Heart left ventricle (tissue), 16 donors: ENCODE measurements at regions of chr4 and their contacts with region 1.

Region 1: GRCh38 chr4:137124278-137124932 is 407.9 kb downstream of the PCDH18 start:
- DNase-seq: no peak
- ATAC-seq: peak; percentile 80 to 99 (median 89)
- H3K4me3 ChIP-seq: peak overlapping the region in 10 of 12 donors; percentile 5 to 59 (median 40)
- H3K27ac ChIP-seq: no peak overlapping the region
- H3K4me1 ChIP-seq: no peaks in the 10 kb centered on the region
- H3K27me3 ChIP-seq: no peaks in the 10 kb centered on the region
- CTCF ChIP-seq: peak; percentile 33 to 75 (median 63)
- POLR2A ChIP-seq: no peak

Region 2: DNA sequence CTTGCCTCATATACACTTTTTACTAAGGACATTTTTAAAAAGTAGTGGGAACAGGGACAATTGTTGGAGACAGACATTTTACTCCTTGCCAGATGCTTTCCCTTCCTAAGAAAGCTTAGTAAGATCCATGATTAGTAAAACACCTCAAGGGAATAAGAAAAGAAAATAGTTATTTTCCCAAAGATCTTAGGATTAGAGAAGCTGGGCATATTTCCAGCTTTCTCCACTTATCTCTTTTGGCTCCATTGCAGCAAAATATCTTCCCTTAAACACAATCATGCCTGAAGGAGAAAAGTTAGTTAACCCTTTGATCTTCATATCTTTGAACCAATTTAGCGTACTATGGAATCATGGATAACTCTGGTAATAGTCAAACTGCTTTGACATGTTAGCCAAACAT is 150.0 kb after region 1 on chr4:
- intact Hi-C with region 1: loop called in 1 of 10 experiments (anchors 10 kb)
- DNase-seq: no peak
- ATAC-seq: peak in 1 of 4 donors; percentile 31
- H3K4me3 ChIP-seq: no peak overlapping the region
- H3K27ac ChIP-seq: no peak overlapping the region
- H3K4me1 ChIP-seq: peaks cover 0 to 10% (median 0%) of the 10 kb centered on the region in 12 donors
- H3K27me3 ChIP-seq: no peaks in the 10 kb centered on the region
- CTCF ChIP-seq: no peak
- POLR2A ChIP-seq: no peak

Region 3: GRCh38 chr4:137531986-137532868 is 407.8 kb after region 1 on chr4 and contains the start of gene PCDH18:
- intact Hi-C with region 1: loop called in 3 of 10 experiments (anchors 10 kb)
- DNase-seq: peak; percentile 83 to 92 (median 89)
- ATAC-seq: peak; percentile 74 to 93 (median 92)
- H3K4me3 ChIP-seq: peak within 1 kb of the TSS; percentile 33 to 75 (median 60)
- H3K27ac ChIP-seq: peak within 1 kb of the TSS; percentile 64 to 87 (median 78)
- H3K4me1 ChIP-seq: peaks cover 0 to 16% (median 0%) of the 10 kb centered on the region in 12 donors
- H3K27me3 ChIP-seq: no peaks in the 10 kb centered on the region
- CTCF ChIP-seq: no peak
- POLR2A ChIP-seq: peak in 1 of 2 donors; percentile 63
- total RNA-seq, gene PCDH18: 2.2 to 14.5 (median 5.9) TPM

Region 4: DNA sequence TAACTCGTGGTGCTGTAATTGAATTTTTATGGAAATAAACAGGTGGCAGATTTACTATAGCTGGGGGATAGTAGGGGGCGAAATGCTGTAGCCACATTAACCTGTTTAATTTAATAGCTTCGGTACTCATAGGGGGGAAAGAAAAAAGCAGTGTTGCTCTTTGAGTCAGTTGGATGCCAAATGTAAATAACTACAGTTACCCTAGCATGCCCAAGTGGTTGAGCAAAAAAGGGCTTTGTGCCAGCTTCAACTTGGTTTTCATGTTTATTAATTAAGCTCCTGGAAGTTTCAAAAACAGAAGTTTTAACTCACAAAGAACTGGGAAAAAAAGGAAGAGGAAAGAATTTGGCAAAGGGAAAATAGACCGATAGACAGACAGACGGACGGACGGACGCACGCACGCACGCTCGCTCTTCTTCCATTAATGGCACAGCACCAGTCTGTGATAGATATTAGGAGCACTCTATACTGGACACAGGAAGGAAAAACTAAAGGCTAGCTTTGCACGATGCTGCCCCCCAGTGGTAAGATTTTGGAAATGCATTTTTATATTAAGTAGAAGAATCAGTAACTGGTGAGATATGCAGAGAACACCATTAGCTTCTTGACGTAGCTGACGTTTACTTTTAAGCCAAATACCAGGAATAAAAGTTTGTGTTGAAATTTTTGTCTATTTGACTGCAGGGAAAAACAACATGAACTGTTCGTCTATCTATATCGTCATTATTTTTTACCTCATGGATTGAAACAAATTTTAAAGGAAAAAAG is 965.9 kb after region 1 on chr4:
- intact Hi-C with region 1: loop called in 7 of 10 experiments (anchors 5 to 10 kb)
- DNase-seq: peak in 2 of 5 donors; percentile 42 to 43
- ATAC-seq: peak in 3 of 4 donors; percentile 74 to 86 (median 74)
- H3K4me3 ChIP-seq: peak overlapping the region in 3 of 12 donors; percentile 18 to 32 (median 28)
- H3K27ac ChIP-seq: no peak overlapping the region
- H3K4me1 ChIP-seq: peaks cover 0 to 14% (median 2%) of the 10 kb centered on the region in 12 donors
- H3K27me3 ChIP-seq: no peaks in the 10 kb centered on the region
- CTCF ChIP-seq: peak; percentile 69 to 89 (median 80)
- POLR2A ChIP-seq: no peak

Region 5: DNA sequence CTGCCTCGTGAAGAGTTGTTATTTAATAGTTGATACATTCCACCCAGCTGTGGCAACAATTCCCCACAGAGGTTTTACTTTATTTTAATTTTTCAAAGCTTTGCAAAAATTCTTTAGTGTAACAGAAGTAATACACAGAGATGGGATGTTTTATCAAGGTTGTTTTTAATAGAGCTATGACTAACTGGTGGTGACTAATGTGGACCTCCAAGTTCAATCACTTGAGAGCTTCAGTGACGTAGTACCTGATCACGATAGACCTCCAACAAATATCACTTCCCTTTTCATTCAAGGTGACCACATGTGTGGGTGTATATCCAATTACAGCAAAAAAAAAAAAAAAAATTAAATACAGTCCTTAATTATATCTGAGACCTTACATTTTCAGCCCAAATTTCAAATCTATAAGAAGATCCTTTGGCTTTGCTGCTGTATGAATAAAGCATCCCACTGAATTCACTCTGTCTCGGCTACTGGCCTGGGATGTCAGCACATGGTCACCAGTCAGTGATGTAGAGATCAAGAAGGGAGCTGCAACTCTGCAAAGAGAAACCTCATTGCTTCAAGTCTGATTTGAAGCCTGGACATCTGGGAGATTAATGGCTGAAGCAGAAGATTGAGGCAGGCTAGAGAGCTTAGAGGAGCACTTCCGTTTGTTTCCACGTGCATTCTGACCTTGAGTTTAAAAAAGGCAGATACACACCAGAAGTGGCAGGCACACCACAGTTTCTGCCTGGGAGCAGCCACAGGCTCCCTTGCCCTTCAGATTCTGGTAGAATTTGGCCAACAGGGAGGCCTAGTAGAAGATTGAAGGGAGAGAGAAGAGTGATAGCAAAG is 1545.3 kb after region 1 on chr4:
- intact Hi-C with region 1: loop called in 1 of 10 experiments (anchors 10 kb)
- DNase-seq: no peak
- ATAC-seq: no peak
- H3K4me3 ChIP-seq: no peak overlapping the region
- H3K27ac ChIP-seq: no peak overlapping the region
- H3K4me1 ChIP-seq: peaks cover 0 to 20% (median 2%) of the 10 kb centered on the region in 12 donors
- H3K27me3 ChIP-seq: no peaks in the 10 kb centered on the region
- CTCF ChIP-seq: no peak
- POLR2A ChIP-seq: no peak